Right ventricle myocardium inferior (tissue), 1 donor: ENCODE measurements at regions of chr15 and their contacts with region 1.

Region 1: GRCh38 chr15:75367913-75368688 is at the start of gene MAN2C1:
- DNase-seq: peak; percentile 98
- ATAC-seq: peak; percentile 97
- total RNA-seq, gene MAN2C1: 89.2 TPM

Region 2: GRCh38 chr15:75204340-75205063 is 163.6 kb before region 1 on chr15:
- intact Hi-C with region 1: no loop called
- DNase-seq: peak; percentile 95
- ATAC-seq: peak; percentile 86

Region 3: DNA sequence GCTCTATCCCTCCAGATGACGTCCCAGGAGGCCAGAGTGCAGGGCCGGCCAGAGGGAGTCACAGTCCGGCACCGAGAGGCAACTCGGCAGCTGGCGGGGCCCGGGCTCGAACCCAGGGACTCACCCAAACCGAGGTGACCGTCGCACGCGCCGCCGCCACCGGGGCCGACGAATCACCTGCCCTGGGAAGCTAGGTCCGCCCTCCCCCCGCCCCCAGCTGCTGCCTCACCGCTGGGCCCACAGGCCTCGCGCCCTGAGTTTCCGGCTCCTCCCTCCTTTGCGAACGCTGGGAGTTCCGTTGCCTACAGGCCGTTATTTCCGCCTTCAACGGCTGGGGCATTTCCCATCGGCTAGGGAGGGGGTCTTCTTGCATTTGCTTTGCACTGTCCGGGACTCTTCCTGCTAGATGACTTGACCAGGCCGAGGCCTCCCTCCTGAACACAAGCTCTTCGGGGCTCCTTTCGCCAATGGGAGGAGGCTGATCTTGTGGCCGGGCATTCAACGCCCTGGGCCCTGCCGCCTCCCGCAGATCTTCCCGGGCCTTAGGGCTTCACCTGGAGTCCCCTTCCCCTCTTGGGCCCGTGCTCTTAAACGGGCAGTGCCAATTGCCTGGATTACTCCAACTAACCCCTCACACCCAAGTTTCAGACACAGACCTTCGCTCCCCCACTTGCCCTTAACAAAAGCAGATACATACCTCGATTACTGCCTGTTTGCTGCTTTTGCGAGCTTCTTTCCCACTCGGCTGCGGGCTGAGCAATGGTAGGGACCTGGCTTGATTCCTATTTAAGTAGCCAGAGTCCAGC is 257.6 kb after region 1 on chr15 and contains the start of gene SNUPN:
- intact Hi-C with region 1: loop called (anchors 5 kb)
- DNase-seq: peak; percentile 97
- ATAC-seq: peak; percentile 94
- total RNA-seq, gene SNUPN: 19.4 TPM

Region 4: GRCh38 chr15:75684642-75685041 is 316.5 kb after region 1 on chr15:
- intact Hi-C with region 1: loop called (anchors 2 kb)
- DNase-seq: no peak
- ATAC-seq: no peak